ENCODE measurements at regions of chr6 and their contacts with region 1.

Region 1: DNA sequence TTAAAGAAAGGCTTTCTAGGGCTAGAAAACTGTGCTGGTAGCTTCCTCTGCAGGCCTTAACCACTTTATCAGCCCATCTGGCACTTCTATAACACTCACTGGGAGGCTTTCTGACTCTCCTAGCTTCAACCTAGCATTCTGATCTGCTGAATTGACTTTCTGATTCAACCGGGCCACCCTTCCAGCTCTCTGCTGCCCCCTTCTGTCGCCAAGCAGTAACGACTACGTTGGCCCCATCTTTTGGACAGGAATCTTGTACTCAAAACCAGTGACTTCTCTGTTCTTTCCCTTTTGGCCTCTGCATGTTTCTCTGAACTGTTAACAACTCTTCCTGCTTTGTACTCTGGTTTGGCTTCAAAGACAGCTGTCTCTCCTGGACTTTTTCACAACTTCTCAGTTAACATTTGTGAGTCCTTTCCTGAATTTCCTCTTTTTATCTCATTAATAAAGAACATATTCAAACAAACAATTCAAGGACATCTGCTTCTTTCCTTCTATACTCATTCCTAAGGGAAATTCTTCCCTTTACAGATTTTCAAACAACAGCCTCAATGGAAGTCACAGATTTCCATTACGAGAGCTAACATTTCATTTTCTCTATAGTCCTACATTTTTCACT is 43.9 kb upstream of the FAM135A start:
- DNase-seq: peak; percentile 68
- ATAC-seq: peak; percentile 98
- H3K4me3 ChIP-seq: no peak overlapping the region
- H3K27ac ChIP-seq: no peak overlapping the region
- H3K4me1 ChIP-seq: no peaks in the 10 kb centered on the region
- H3K27me3 ChIP-seq: peaks cover 25% of the 10 kb centered on the region
- CTCF ChIP-seq: peak; percentile 91
- POLR2A ChIP-seq: no peak
- RAD21 ChIP-seq: peak; percentile 62

Region 2: GRCh38 chr6:70310063-70310694 is 59.3 kb before region 1 on chr6:
- CTCF ChIA-PET with region 1: interaction called, 22 read pairs
- POLR2A ChIA-PET with region 1: no interaction called
- dilution Hi-C with region 1: no loop called
- in situ Hi-C with region 1: no loop called
- intact Hi-C with region 1: loop called (anchors 1 kb)
- DNase-seq: peak; percentile 53
- ATAC-seq: no peak; the same call in 1 of the 2 replicates
- H3K4me3 ChIP-seq: no peak overlapping the region
- H3K27ac ChIP-seq: no peak overlapping the region
- H3K4me1 ChIP-seq: no peaks in the 10 kb centered on the region
- H3K27me3 ChIP-seq: peaks cover 33% of the 10 kb centered on the region
- CTCF ChIP-seq: peak; percentile 73
- POLR2A ChIP-seq: no peak
- RAD21 ChIP-seq: peak; percentile 56

Region 3: DNA sequence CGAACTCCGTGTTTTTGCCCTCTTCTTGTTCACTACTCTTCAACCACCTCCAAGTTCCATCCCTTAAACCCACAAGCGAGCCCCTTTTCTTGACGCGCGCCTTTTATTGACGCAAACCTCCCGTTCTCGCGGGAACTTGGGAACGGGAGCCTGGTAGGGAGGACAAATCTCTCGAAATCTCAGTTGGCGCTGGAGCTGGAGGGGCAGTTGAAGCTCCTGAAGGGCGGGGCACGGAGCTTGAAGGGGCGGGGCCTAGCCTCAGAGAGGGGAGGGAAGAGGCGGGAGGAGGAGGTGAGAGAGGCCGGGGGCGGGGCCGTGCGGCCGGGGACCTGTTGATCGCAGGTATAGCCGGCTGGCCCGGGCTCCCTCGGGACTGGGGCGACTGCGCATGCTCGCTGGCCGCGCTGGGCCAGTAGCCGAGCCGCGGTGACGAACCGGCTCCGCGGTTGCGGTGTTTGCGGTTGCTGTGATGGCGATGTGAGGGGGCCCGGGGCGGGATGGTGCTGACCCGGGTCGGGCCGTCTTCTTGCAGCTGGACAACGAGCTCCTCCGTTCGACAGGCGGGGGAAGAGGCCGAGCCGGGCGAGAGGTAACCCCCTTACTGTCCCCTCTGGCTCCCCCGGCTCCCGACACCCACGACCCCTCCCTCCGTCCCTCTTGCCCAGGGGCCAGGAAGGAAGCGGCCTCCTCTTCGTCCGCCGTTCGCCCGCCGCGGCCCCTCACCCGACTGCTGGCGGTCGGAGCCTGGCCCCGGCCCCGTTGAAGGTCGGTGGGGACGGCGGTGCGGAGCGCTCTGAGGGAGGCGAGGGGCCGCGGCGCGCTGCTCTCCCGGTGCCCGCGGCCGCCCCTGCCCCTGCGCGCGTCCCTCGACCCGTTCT is 43.9 kb after region 1 on chr6 and contains the start of gene FAM135A:
- CTCF ChIA-PET with region 1: interaction called, 3 read pairs
- POLR2A ChIA-PET with region 1: no interaction called
- dilution Hi-C with region 1: no loop called
- in situ Hi-C with region 1: no loop called
- intact Hi-C with region 1: loop called (anchors 1 kb)
- DNase-seq: peak; percentile 96
- ATAC-seq: peak; percentile 96
- H3K4me3 ChIP-seq: peak within 1 kb of the TSS; percentile 56
- H3K27ac ChIP-seq: peak within 1 kb of the TSS; percentile 81
- H3K4me1 ChIP-seq: no peaks in the 10 kb centered on the region
- H3K27me3 ChIP-seq: no peaks in the 10 kb centered on the region
- CTCF ChIP-seq: no peak
- POLR2A ChIP-seq: peak; percentile 79
- RAD21 ChIP-seq: no peak
- total RNA-seq, gene FAM135A: 7.9 and 9.7 TPM in 2 replicates

Region 4: GRCh38 chr6:70566751-70567382 is 197.4 kb after region 1 on chr6 and contains the start of gene SDHAF4:
- CTCF ChIA-PET with region 1: no interaction called
- POLR2A ChIA-PET with region 1: no interaction called
- dilution Hi-C with region 1: no loop called
- in situ Hi-C with region 1: no loop called
- intact Hi-C with region 1: loop called (anchors 10 kb)
- DNase-seq: peak; percentile 76
- ATAC-seq: peak; percentile 100
- H3K4me3 ChIP-seq: peak within 1 kb of the TSS; percentile 90
- H3K27ac ChIP-seq: peak within 1 kb of the TSS; percentile 68
- H3K4me1 ChIP-seq: no peaks in the 10 kb centered on the region
- H3K27me3 ChIP-seq: no peaks in the 10 kb centered on the region
- CTCF ChIP-seq: no peak
- POLR2A ChIP-seq: no peak; the same call in 1 of the 2 replicates
- RAD21 ChIP-seq: no peak
- total RNA-seq, gene SDHAF4: 1.6 and 2.5 TPM in 2 replicates